ENCODE measurements at regions of chr10 and their contacts with region 1.

Region 1: GRCh38 chr10:103918053-103918846 is at the start of gene STN1:
- DNase-seq: peak; percentile 98
- H3K4me3 Mint-ChIP-seq: peak within 1 kb of the TSS; percentile 98
- H3K27ac Mint-ChIP-seq: peak within 1 kb of the TSS; percentile 98
- H3K4me1 Mint-ChIP-seq: peaks cover 29% of the 10 kb centered on the region
- H3K27me3 Mint-ChIP-seq: no peaks in the 10 kb centered on the region
- total RNA-seq, gene STN1: 56.1 to 57.0 TPM

Region 2: DNA sequence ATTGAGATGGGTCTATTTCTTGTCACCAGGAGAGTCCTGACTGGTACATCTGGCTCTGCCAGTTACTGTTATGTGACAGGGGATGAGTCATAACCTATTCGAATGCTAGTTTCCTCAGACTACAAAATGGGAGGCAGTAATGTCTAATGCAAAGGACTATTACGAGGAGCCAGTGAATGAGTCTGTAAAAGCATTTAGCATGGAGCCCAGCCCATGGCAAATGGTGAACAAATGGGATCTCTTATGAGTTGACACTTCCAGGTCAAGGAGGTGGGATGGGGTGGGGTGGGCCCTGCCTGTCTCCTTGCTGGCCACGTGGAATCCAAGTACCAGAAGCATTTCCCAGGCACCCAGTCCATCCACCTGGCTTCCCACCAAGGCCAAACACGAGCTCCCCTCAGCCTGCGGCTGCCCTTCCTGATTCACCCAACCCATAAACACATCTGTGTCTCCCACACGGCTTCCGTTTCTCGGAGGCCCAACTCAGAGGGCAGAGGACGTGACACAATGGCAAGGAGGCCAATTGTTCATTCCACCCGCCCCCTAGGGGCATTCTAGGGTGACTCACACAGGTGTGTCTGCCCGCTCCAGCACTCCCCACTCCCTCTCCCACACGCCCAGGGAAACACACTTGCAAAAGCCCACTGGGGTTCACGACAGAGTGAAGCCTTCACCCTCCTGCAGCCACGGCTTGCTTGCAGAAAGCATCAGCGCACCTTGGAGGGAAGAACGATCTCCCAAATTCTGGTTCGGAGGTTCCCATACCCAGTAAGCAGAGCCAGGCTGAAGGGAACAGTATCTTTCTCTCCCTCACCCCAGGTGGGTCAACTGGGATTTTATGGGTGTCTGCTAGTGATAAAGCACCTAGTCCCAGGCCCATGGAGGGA is 172.7 kb before region 1 on chr10:
- CTCF ChIA-PET with region 1: no interaction called
- POLR2A ChIA-PET with region 1: no interaction called
- intact Hi-C with region 1: loop called (anchors 5 kb)
- DNase-seq: peak; percentile 90
- H3K4me3 Mint-ChIP-seq: peak overlapping the region; percentile 27
- H3K27ac Mint-ChIP-seq: peak overlapping the region; percentile 86
- H3K4me1 Mint-ChIP-seq: peaks cover 43% of the 10 kb centered on the region
- H3K27me3 Mint-ChIP-seq: no peaks in the 10 kb centered on the region

Region 3: GRCh38 chr10:103895411-103896186 is 22.7 kb before region 1 on chr10:
- CTCF ChIA-PET with region 1: interaction called, 3 read pairs
- POLR2A ChIA-PET with region 1: interaction called, 4 read pairs
- intact Hi-C with region 1: loop called (anchors 1 kb)
- DNase-seq: peak; percentile 45
- H3K4me3 Mint-ChIP-seq: no peak overlapping the region
- H3K27ac Mint-ChIP-seq: peak overlapping the region; percentile 82
- H3K4me1 Mint-ChIP-seq: peaks cover 65% of the 10 kb centered on the region
- H3K27me3 Mint-ChIP-seq: no peaks in the 10 kb centered on the region

Region 4: DNA sequence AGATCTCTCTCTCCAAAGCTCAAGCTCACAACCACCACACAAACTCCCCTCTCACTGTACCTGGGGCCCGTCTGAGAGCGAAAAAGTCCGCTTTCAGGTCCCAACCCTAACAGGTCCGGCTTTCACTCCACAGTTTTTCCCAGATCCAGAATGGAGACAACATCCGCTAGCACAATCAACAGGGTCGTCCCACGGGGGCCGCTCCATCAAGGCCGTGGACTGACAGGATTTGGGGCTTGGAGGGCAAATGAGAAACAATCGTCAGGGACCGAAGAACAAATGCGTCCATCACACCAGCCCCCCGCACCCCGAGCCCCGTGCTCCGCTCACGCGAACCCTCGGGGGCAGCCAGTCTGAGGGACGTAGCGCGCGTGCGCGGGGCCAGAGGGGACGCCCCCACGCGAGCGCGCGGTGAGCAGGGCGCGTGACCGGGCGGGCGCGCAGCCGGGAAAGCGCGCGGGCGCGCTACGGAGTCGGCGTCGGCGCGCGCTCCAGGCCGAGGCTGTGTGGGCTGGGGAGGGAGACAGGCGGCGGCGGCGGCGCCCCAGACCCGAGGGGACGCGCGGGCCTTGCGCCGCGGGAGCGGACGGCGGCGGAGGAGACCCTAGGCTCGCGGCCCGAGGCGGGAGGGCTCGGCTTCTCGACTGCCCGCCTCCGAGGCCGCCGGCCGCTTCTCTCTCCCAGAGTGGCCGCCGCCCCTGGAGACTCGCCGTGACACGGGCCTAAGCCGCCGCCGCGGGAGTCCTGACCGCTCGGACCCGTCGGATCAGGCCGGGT is 48.6 kb after region 1 on chr10 and contains the start of gene SLK:
- CTCF ChIA-PET with region 1: no interaction called
- POLR2A ChIA-PET with region 1: interaction called, 3 read pairs
- intact Hi-C with region 1: loop called (anchors 1 kb)
- DNase-seq: peak; percentile 86
- H3K4me3 Mint-ChIP-seq: peak within 1 kb of the TSS; percentile 94
- H3K27ac Mint-ChIP-seq: peak within 1 kb of the TSS; percentile 92
- H3K4me1 Mint-ChIP-seq: peaks cover 33% of the 10 kb centered on the region
- H3K27me3 Mint-ChIP-seq: no peaks in the 10 kb centered on the region
- total RNA-seq, gene SLK: 26.1 to 27.7 TPM

Region 5: GRCh38 chr10:104337974-104338735 is 419.9 kb after region 1 on chr10 and contains the start of gene ITPRIP:
- CTCF ChIA-PET with region 1: no interaction called
- POLR2A ChIA-PET with region 1: no interaction called
- intact Hi-C with region 1: loop called (anchors 5 kb)
- DNase-seq: peak; percentile 81
- H3K4me3 Mint-ChIP-seq: peak within 1 kb of the TSS; percentile 82
- H3K27ac Mint-ChIP-seq: peak within 1 kb of the TSS; percentile 90
- H3K4me1 Mint-ChIP-seq: peaks cover 48% of the 10 kb centered on the region
- H3K27me3 Mint-ChIP-seq: no peaks in the 10 kb centered on the region
- total RNA-seq, gene ITPRIP: 15.6 to 16.6 TPM